Transverse colon (tissue), 4 donors: ENCODE measurements at regions of chr13 and their contacts with region 1.

Region 1: DNA sequence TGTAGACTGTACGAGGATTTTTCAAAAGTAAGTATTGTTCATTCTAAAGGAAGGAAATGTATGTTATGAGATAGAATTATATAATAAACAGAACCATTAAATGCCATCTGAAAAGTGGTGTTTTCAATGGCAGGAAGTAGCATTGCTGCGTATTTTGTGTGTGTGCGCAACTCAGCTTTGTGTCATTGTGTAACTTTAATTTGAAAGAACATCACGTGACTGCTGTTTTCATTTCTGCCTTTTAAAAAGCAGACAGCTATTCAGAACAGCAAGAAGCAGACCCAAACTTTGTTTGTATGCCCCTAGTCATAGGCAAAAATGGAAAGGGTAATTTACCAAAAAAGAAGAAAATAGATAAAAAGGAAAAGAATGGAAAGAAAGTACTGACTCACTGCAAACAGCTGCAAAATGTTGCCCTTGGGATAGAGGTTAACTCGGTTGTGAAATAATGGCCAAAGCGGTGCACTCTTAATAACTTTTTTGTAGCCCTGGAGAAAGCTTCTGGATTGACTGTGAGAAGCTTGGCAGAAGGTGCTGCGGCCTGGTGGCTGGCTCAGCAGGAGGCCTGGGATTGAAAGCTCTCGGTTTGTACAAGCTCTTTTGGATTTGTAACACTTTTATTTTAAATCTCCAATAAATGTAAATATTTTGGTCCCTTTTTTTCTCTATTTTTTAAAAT is 97.3 kb downstream of the GGACT start:
- DNase-seq: no peak
- H3K4me3 ChIP-seq: no peak overlapping the region
- H3K27ac ChIP-seq: peak overlapping the region in 1 of 4 donors; percentile 24
- H3K4me1 ChIP-seq: peaks cover 0 to 6% (median 2%) of the 10 kb centered on the region in 4 donors
- H3K27me3 ChIP-seq: no peaks in the 10 kb centered on the region
- CTCF ChIP-seq: no peak
- EP300 ChIP-seq: no peak
- POLR2A ChIP-seq: no peak

Region 2: DNA sequence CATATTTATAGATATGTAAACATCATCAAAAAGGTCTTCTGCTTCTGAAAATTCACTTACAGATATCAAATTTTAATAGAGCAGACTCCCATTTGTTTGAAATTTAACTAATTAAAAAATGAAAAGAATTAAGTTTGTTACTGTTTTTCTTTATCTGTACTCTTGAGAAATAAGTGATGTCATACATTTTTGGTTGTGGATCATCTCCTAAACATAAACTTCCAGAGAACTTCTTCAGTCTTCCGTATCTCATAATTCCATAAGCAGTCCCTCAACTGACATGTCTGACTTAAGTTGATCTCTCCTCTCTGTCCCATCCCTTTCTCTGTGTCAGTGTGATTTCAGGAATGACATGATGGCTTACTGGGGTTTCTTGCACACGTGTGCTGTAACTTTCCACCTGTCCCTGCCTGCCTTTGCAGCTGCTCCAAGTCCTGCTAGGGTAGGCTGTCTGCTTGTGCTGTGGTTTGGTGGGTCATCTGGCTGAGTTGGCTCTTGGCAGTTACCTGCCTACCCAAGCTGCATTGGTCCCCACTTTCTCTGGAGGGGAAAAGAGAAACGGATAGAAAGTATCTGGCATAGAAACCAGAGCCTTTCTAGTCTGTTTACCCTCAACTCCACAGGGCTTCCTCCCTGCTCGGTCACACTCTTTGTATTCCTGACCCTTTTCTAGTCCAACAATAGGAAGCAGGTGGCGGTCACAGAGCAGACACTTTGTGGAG is 29.8 kb before region 1 on chr13:
- in situ Hi-C with region 1: no loop called
- intact Hi-C with region 1: loop called (anchors 1 kb)
- DNase-seq: no peak
- H3K4me3 ChIP-seq: no peak overlapping the region
- H3K27ac ChIP-seq: no peak overlapping the region
- H3K4me1 ChIP-seq: peaks cover 0 to 10% (median 4%) of the 10 kb centered on the region in 4 donors
- H3K27me3 ChIP-seq: no peaks in the 10 kb centered on the region
- CTCF ChIP-seq: no peak
- EP300 ChIP-seq: no peak
- POLR2A ChIP-seq: no peak